H1 (cell line): ENCODE measurements at regions of chr4 and their contacts with region 1.

Region 1: DNA sequence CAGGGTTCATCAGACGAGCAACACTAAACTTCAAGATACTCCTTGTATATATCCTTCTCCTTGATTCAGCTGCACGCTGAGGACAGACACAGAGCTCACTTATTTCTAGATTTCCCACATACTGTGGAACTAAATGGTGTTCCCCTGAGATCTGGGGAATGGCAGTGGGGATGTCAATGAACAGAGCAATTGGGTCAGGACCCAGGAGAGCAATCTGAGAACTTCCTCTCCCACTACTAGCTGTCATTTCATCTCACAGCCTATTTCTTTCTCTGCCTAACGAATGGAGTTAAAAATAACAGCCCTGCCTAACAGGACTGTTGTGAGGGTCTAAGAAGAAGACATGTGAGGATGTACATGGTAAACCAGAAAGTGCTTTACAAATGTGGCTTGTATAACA is 10.7 kb downstream of the NAAA start:
- DNase-seq: peak in 1 of 2 experiments; percentile 20
- H3K4me3 ChIP-seq: no peak overlapping the region
- H3K27ac ChIP-seq: no peak overlapping the region
- H3K4me1 ChIP-seq: no peaks in the 10 kb centered on the region
- H3K27me3 ChIP-seq: no peaks in the 10 kb centered on the region
- CTCF ChIP-seq: no peak
- EP300 ChIP-seq: no peak
- POLR2A ChIP-seq: no peak
- RAD21 ChIP-seq: no peak

Region 2: GRCh38 chr4:75940692-75941253 is 10.6 kb after region 1 on chr4 and contains the start of gene NAAA:
- CTCF ChIA-PET with region 1: interaction called, 12 read pairs
- POLR2A ChIA-PET with region 1: interaction called, 9 read pairs
- DNase-seq: peak; percentile 75 to 92
- H3K4me3 ChIP-seq: peak within 1 kb of the TSS; percentile 69 to 85 (median 74)
- H3K27ac ChIP-seq: no peak within 1 kb of the TSS
- H3K4me1 ChIP-seq: peaks cover 0 to 3% (median under 1%) of the 10 kb centered on the region in 4 experiments; a peak in 2 of 7 replicates
- H3K27me3 ChIP-seq: peaks cover 0 to 3% (median 0%) of the 10 kb centered on the region in 4 experiments; a peak in 1 of 7 replicates
- CTCF ChIP-seq: peak; percentile 42 to 66 (median 64)
- EP300 ChIP-seq: no peak
- POLR2A ChIP-seq: peak in 1 of 2 experiments; percentile 59; a peak in 1 of 3 replicates
- RAD21 ChIP-seq: peak; percentile 30 to 48; a peak in 3 of 4 replicates
- total RNA-seq, gene NAAA: 9.4 and 13.0 TPM in 2 replicates

Region 3: DNA sequence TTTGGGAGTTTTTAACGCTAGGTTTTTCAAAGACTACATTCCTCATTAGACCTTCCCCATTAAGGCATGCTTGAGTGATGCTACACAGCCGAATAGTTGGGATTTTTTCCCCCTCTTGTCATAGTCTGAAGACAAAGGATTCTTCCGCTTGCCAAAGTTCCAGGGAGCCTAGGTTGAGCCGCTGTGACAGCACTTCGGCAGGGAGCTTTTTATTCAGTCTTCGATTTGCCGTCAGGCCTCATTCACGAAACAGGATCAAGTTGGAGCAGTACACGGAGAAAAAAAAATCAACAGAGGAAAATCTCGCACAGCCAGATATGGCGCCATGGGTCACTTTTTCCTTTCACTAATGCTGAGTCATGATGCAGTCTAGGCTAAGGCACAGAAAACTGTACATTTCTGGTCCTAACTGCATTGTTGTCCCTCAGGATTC is 529.2 kb after region 1 on chr4:
- CTCF ChIA-PET with region 1: no interaction called
- POLR2A ChIA-PET with region 1: no interaction called
- DNase-seq: peak in 1 of 2 experiments; percentile 88
- H3K4me3 ChIP-seq: peak overlapping the region in 2 of 4 experiments; percentile 16 to 23; a peak in 2 of 8 replicates
- H3K27ac ChIP-seq: peak overlapping the region; percentile 77
- H3K4me1 ChIP-seq: peaks cover 3 to 10% (median 9%) of the 10 kb centered on the region in 4 experiments; a peak in 5 of 7 replicates
- H3K27me3 ChIP-seq: no peaks in the 10 kb centered on the region
- CTCF ChIP-seq: no peak
- EP300 ChIP-seq: no peak
- POLR2A ChIP-seq: peak in 1 of 2 experiments; percentile 73; a peak in 2 of 3 replicates
- RAD21 ChIP-seq: 0 out of 4 replicates have a peak, but pooled peaks of 1 of the 2 experiments have one; percentile 7